ENCODE measurements at regions of chr15 and their contacts with region 1.

Region 1: GRCh38 chr15:29925227-29926082 is 103.2 kb upstream of the TJP1 start:
- DNase-seq: peak; percentile 66

Region 2: GRCh38 chr15:29774900-29775299 is 150.6 kb before region 1 on chr15:
- CTCF ChIA-PET with region 1: no interaction called
- POLR2A ChIA-PET with region 1: no interaction called
- DNase-seq: no peak

Region 3: DNA sequence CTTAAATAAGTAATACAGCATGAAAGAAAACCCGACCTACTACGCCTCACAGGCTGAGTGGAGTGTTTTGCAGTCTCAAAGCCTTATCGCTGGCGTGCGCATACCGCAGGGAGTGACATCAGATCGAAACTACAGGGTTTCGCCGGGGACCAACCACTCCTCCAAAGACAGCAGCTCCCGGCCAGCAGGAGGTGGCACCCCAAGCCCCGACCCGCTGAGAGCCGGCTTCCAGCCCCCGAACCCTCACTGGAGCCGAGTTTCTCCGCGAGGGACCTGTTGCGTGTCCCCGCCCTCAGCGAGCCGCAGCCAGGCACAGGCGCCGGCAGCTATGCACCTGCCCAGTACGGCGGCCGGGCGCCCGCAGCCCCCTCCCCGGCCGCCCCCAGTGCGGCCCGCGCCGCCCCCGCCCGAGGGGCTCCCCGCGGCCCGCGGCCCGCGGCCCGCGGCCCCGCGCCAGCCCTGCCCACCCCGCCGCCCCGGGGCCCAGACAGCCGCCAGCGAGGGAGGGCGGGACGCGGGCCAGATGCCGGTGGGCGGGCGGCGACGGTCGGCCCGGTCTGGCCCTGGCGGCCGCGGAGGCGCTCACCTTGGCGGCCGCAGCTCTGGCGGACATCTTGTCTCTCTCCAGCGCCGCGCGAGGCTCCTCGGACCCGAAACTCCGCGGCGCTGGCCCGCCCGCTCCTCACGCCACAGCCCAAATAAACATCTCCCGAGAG is 103.9 kb before region 1 on chr15:
- CTCF ChIA-PET with region 1: interaction called, 5 read pairs
- POLR2A ChIA-PET with region 1: interaction called, 18 read pairs
- DNase-seq: peak; percentile 46

Region 4: DNA sequence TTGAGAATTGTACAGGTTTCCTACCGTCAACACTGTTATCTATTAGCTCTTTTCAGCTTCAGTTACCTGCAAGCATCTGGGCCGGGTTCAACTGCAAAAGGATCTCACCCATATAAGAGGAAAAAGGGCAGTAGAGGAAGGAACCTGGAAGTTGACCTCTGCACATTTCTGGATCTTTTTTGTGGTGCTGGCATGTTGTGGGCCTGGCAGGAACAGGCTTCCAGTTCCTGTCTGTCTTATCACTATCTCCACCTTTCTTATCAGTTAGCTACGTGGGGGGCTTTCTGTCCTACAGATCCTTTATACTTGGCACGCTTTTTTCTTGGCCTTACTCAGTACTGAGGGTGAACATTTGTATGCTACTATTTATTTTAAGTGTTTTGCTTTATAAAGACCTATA is 61.0 kb before region 1 on chr15:
- CTCF ChIA-PET with region 1: interaction called, 11 read pairs
- POLR2A ChIA-PET with region 1: no interaction called
- DNase-seq: no peak

Region 5: GRCh38 chr15:29880341-29880740 is 45.1 kb before region 1 on chr15:
- CTCF ChIA-PET with region 1: no interaction called
- POLR2A ChIA-PET with region 1: no interaction called
- DNase-seq: no peak

Region 6: GRCh38 chr15:29944925-29945324 is 19.5 kb after region 1 on chr15:
- CTCF ChIA-PET with region 1: no interaction called
- POLR2A ChIA-PET with region 1: no interaction called
- DNase-seq: no peak

Region 7: DNA sequence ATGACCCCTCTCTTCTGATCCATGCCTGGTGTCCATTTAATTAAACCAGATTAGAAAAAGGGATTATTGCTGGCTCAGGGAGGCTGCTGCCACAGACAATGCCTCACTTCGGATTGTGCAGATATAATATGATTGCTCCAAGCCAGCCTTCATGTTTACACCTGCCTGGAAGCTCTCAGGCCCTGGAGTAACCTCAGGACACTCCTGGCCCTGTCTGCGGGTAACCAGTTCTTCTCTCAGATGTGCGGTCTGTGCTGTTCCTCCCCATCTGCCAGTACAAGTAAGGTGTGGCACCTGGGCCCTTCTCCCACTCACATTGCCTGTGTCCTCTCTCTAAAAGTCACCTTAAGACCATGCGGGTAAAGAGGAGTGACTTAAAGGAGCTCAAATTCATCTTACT is 148.5 kb after region 1 on chr15:
- CTCF ChIA-PET with region 1: interaction called, 10 read pairs
- POLR2A ChIA-PET with region 1: no interaction called
- DNase-seq: no peak

Measured in HEK293T (cell line).